Activated CD4-positive, alpha-beta T cell treated with anti-CD3 and anti-CD28 coated beads, Interleukin-2, amount 10 ng/mL, durations not matched to agents 24 days and 14 days (primary cell): ENCODE measurements at regions of chr6 and their contacts with region 1.

Region 1: GRCh38 chr6:28266962-28267694 is at the start of gene ZSCAN26:
- DNase-seq: peak; percentile 96
- H3K4me3 Mint-ChIP-seq: no peak within 1 kb of the TSS
- H3K27ac Mint-ChIP-seq: no peak within 1 kb of the TSS
- H3K4me1 Mint-ChIP-seq: peaks cover 11% of the 10 kb centered on the region
- H3K27me3 Mint-ChIP-seq: peaks cover 9% of the 10 kb centered on the region
- total RNA-seq, gene ZSCAN26: 5.9 and 7.7 TPM in 2 replicates

Region 2: GRCh38 chr6:28124102-28124970 is 142.8 kb before region 1 on chr6 and contains the start of gene ZSCAN16:
- intact Hi-C with region 1: loop called (anchors 2 kb)
- DNase-seq: peak; percentile 92
- H3K4me3 Mint-ChIP-seq: peak within 1 kb of the TSS; percentile 95
- H3K27ac Mint-ChIP-seq: peak within 1 kb of the TSS; percentile 83
- H3K4me1 Mint-ChIP-seq: peaks cover 48% of the 10 kb centered on the region
- H3K27me3 Mint-ChIP-seq: no peaks in the 10 kb centered on the region
- total RNA-seq, gene ZSCAN16: 3.0 and 4.0 TPM in 2 replicates

Region 3: GRCh38 chr6:28252009-28252975 is 14.8 kb before region 1 on chr6 and contains the start of gene ZKSCAN4:
- intact Hi-C with region 1: loop called (anchors 1 kb)
- DNase-seq: peak; percentile 95
- H3K4me3 Mint-ChIP-seq: peak within 1 kb of the TSS; percentile 97
- H3K27ac Mint-ChIP-seq: peak within 1 kb of the TSS; percentile 89
- H3K4me1 Mint-ChIP-seq: peaks cover 19% of the 10 kb centered on the region
- H3K27me3 Mint-ChIP-seq: no peaks in the 10 kb centered on the region
- total RNA-seq, gene ZKSCAN4: 3.8 and 4.9 TPM in 2 replicates

Region 4: GRCh38 chr6:28281288-28282064 is 14.3 kb after region 1 on chr6 and contains the start of gene PGBD1:
- intact Hi-C with region 1: loop called (anchors 2 kb)
- DNase-seq: peak; percentile 86
- H3K4me3 Mint-ChIP-seq: peak within 1 kb of the TSS; percentile 88
- H3K27ac Mint-ChIP-seq: no peak within 1 kb of the TSS
- H3K4me1 Mint-ChIP-seq: peaks cover 13% of the 10 kb centered on the region
- H3K27me3 Mint-ChIP-seq: peaks cover 2% of the 10 kb centered on the region
- total RNA-seq, gene PGBD1: 1.8 and 2.5 TPM in 2 replicates

Region 5: DNA sequence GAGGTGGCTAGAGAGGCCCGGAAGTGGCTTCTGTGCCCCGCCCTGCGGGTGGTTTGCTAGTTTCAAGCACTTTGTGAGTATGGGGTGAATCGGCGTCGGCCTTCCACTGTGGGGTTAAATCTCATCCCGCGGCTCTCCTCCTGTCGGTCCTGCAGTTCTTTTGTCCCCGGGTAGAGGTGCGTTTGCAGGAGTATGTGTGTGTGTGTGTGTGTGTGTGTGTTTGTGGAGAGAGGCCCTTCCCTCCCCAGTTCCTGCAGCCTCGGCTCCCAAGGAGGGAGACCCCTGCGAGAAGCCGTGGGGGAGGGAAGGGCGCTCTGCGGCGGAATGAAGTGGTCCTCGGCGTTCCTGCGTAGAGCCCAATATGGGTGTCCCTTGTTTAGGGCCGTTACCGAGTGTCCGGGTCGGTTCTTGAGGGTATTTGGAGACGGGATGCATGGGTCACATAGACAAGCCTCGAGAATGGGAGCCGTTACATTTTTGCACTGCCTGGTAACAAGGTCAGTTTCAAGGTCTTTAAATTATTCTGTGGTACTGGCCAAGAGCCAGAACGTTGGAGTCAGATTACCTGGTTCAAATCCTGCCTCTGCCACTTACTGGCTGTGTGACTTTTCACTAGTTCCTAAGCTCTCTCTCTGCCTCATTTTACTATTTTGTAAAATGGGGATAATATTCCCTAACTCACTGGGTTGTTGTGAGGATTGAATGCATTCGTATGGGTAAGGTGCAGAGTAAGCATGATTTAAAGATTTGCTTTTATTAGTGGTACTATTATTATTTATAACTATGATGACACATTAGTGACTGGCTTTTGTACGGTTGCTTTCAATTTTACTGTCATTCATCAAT is 83.0 kb after region 1 on chr6 and contains the start of gene ZKSCAN3:
- intact Hi-C with region 1: loop called (anchors 2 kb)
- DNase-seq: peak; percentile 96
- H3K4me3 Mint-ChIP-seq: peak within 1 kb of the TSS; percentile 98
- H3K27ac Mint-ChIP-seq: peak within 1 kb of the TSS; percentile 91
- H3K4me1 Mint-ChIP-seq: peaks cover 22% of the 10 kb centered on the region
- H3K27me3 Mint-ChIP-seq: peaks cover 22% of the 10 kb centered on the region
- total RNA-seq, gene ZKSCAN3: 2.7 and 2.9 TPM in 2 replicates

Region 6: DNA sequence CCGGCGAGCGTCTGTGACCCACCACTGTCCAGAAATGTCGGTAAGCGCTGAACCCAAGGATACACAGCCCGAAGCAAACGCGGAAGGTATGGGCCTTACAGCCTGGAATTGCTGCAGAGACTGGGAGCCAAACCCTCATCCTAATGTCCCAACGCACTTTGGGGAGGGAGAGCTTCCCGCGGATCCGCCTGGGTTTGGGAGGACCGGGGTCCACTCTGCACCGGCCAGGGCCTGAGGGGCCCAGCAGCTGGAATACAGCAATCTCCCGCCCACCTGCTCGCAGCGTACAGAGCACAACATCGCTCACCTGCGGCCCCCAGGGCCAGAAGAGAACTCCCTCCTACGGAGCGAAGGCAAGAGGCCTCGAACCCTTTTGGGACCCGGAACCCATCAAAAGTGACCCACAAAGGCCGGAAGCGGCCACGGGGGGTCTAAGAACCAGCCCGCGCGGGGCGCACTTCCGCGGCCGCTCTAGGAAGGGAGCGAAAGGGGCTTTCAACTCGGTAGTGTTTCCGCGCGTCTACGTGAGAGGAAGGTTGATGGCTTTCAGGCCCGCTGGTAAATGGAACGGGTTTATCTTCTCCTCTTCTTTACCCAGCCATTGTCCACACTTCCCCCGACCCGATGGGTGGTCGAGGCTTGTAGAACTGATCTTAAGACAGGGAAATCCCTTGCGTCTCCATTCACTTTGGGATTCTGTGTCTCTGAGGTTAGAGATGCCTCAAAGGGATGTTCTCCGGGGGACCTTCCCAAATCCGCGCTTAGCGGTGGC is 132.4 kb after region 1 on chr6 and contains the start of gene ZSCAN12:
- intact Hi-C with region 1: loop called (anchors 1 kb)
- DNase-seq: peak; percentile 95
- H3K4me3 Mint-ChIP-seq: peak within 1 kb of the TSS; percentile 93
- H3K27ac Mint-ChIP-seq: peak within 1 kb of the TSS; percentile 92
- H3K4me1 Mint-ChIP-seq: peaks cover 49% of the 10 kb centered on the region
- H3K27me3 Mint-ChIP-seq: peaks cover 23% of the 10 kb centered on the region
- total RNA-seq, gene ZSCAN12: 5.8 and 5.9 TPM in 2 replicates

Region 7: DNA sequence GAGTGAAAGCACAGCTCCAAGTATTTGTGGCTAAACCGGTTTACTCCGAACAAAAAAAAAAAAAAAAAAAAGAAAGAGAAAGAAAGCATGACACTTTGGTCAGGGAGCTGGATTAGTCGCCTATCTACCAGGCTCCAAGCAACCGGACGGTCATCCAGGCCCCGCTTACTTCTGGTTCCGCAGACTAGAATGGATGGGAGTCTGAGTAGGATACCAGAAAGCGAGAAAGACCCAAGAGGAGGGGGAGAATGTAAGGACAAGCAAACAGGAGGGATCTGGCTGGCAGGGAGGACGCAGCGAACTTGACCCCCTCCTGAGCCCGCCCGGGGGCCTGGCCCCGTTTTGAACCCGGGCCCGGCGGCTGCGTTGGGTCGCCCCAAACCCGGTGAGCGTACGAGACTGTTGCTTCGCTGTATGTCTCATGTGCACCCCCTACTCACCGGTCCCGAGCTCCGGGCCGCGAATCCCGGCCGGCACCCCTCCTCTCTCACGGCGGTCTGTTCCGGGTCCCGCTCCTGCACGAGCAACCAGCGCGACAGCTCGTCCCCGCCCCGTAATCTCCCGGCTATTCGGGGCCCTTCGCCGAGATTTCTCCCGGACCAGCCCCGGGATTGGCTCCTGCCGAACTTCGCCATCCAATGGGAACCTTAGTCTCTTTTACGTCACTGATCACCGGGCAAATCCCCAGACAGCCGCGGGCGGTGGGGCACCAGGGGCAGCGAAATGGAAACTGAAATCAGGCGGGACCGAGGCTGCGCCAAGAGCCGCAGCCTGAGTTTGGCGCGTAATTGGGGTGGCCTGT is 1945.9 kb after region 1 on chr6 and contains the start of gene TRIM26:
- intact Hi-C with region 1: no loop called
- DNase-seq: peak; percentile 100
- H3K4me3 Mint-ChIP-seq: peak within 1 kb of the TSS; percentile 96
- H3K27ac Mint-ChIP-seq: peak within 1 kb of the TSS; percentile 98
- H3K4me1 Mint-ChIP-seq: peaks cover 47% of the 10 kb centered on the region
- H3K27me3 Mint-ChIP-seq: peaks cover 2% of the 10 kb centered on the region
- total RNA-seq, gene TRIM26: 58.3 and 60.1 TPM in 2 replicates